Heart right ventricle (tissue), 16 donors: ENCODE measurements at regions of chr18 and their contacts with region 1.

Region 1: DNA sequence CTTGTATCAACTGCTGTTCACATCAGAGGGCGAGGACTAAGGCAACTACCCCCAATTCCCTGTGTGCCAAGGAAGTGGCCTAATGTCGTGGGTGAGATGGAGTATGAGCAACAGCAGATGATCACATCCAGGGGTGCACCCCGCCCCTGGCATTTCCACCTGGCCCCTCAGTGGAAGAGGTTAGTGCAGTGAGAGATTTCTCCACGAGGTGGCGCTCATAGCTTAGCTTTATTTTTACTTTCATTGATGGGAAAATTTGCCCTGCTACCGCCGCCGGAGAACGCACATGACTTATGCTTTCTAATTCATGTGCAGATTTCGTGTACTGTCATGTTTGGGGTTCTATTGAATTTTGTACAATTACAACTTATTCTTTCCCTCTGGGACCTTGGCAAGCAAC is 470.6 kb upstream of the MEX3C start:
- DNase-seq: peak; percentile 10 to 17
- ATAC-seq: peak in 1 of 8 donors; percentile 31
- H3K4me3 ChIP-seq: no peak overlapping the region
- H3K27ac ChIP-seq: no peak overlapping the region
- H3K4me1 ChIP-seq: no peaks in the 10 kb centered on the region
- H3K27me3 ChIP-seq: peaks cover 0 to 39% (median 19%) of the 10 kb centered on the region in 7 donors
- CTCF ChIP-seq: peak; percentile 35 to 78 (median 70)

Region 2: GRCh38 chr18:51016903-51017879 is 650.9 kb before region 1 on chr18:
- intact Hi-C with region 1: no loop called
- DNase-seq: no peak
- ATAC-seq: peak in 1 of 8 donors; percentile 30
- H3K4me3 ChIP-seq: no peak overlapping the region
- H3K27ac ChIP-seq: no peak overlapping the region
- H3K4me1 ChIP-seq: no peaks in the 10 kb centered on the region
- H3K27me3 ChIP-seq: no peaks in the 10 kb centered on the region
- CTCF ChIP-seq: no peak

Region 3: GRCh38 chr18:51651761-51652160 is 16.3 kb before region 1 on chr18:
- intact Hi-C with region 1: no loop called
- DNase-seq: no peak
- ATAC-seq: no peak
- H3K4me3 ChIP-seq: no peak overlapping the region
- H3K27ac ChIP-seq: no peak overlapping the region
- H3K4me1 ChIP-seq: no peaks in the 10 kb centered on the region
- H3K27me3 ChIP-seq: peaks cover 0 to 30% (median 14%) of the 10 kb centered on the region in 7 donors
- CTCF ChIP-seq: no peak

Region 4: GRCh38 chr18:52288403-52289004 is 620.4 kb after region 1 on chr18:
- intact Hi-C with region 1: loop called in 1 of 10 experiments (anchors 10 kb)
- DNase-seq: peak in 1 of 2 donors; percentile 10
- ATAC-seq: no peak
- H3K4me3 ChIP-seq: no peak overlapping the region
- H3K27ac ChIP-seq: no peak overlapping the region
- H3K4me1 ChIP-seq: no peaks in the 10 kb centered on the region
- H3K27me3 ChIP-seq: peaks cover 0 to 16% (median 0%) of the 10 kb centered on the region in 7 donors
- CTCF ChIP-seq: peak in 7 of 9 donors; percentile 17 to 49 (median 42)